Caco-2 (cell line): ENCODE measurements at regions of chr14 and their contacts with region 1.

Region 1: GRCh38 chr14:24160850-24161804 is at the start of gene IRF9:
- DNase-seq: peak; percentile 95 to 96
- H3K4me3 ChIP-seq: peak within 1 kb of the TSS; percentile 29
- H3K4me3 Mint-ChIP-seq: peak within 1 kb of the TSS; percentile 77
- H3K27ac Mint-ChIP-seq: peak within 1 kb of the TSS; percentile 82
- H3K4me1 ChIP-seq: peaks cover 12% of the 10 kb centered on the region
- H3K4me1 Mint-ChIP-seq: peaks cover 6% of the 10 kb centered on the region
- H3K27me3 ChIP-seq: no peaks in the 10 kb centered on the region
- H3K27me3 Mint-ChIP-seq: no peaks in the 10 kb centered on the region
- CTCF ChIP-seq: peak; percentile 88
- total RNA-seq, gene IRF9: 54.1 and 55.4 TPM in 2 replicates

Region 2: DNA sequence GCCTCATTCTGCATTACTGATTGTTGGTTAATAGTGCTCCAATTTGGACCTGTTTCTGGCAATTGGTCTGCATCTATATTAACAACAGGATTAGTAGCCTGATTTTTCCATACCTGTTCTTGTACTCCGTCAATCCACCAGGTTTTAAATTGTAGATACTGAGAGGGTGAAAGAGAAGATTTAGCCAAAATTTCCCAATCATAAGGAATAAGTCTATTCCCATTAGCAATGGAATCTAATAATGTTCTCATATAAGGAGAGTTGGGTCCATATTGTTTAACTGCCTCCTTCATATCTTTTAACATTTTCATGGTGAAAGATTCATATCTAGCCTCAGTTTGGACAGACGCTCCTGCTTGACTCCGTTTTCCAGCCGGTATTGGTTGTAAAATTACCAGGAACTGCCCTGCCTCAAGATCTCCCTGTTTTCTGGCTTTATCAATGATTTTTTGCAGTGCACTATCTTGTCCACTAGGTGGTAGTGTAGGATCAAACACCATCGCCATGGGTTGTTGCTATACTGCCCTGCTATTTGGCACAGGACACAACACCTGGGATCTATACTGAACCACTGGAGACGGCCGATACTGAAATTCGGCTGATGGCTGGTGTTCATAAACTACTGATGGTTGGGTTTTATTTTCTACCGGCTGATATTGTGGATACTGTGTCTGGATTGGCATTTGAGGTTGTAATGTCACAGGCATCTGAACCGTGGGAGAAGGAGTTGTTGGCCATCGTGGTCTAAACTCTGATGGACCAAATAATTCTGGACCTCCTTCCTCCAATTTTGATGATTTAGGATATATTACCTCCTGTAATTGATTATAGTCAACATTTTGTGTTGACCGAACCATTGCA is 147.2 kb before region 1 on chr14:
- CTCF ChIA-PET with region 1: no interaction called
- POLR2A ChIA-PET with region 1: no interaction called
- intact Hi-C with region 1: loop called (anchors 1 kb)
- DNase-seq: peak; percentile 52 to 77
- H3K4me3 ChIP-seq: no peak overlapping the region
- H3K4me3 Mint-ChIP-seq: no peak overlapping the region
- H3K27ac Mint-ChIP-seq: no peak overlapping the region
- H3K4me1 ChIP-seq: no peaks in the 10 kb centered on the region
- H3K4me1 Mint-ChIP-seq: no peaks in the 10 kb centered on the region
- H3K27me3 ChIP-seq: no peaks in the 10 kb centered on the region
- H3K27me3 Mint-ChIP-seq: peaks cover 5% of the 10 kb centered on the region
- CTCF ChIP-seq: peak; percentile 66 to 83

Region 3: DNA sequence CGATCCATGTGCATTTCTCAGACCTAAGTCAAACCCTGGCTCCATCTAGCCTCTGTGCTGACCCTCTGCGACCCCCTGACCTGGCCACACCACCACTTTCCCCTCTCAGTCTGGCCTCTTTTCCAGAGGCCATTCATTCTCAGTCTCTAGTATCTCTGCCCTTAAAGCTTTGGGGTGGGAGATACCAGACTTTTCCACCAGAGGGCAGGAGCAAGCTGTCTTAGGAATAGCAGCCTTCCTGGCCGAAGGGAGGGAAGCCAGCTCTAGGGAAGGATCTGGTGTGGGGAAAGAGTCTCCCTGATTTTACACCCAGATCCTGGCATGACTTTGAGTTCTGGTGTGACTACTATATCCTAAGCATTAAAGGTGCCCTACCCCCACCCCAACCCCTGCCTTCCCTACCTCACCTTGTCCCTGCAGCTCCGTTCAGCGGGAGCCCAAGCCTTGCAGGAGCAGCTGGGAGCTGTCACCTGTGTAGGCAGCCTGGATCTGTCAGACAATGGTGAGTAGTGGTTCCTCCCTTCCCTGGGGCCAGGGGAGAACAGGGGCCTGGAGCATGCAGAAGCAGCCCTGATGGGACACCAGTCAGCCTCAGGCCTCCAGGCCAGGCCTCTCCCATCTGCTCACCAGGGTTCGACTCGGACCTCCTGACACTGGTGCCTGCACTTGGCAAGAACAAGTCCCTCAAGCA is 102.7 kb before region 1 on chr14:
- CTCF ChIA-PET with region 1: interaction called, 10 read pairs
- POLR2A ChIA-PET with region 1: no interaction called
- intact Hi-C with region 1: loop called (anchors 1 kb)
- DNase-seq: peak; percentile 70 to 81
- H3K4me3 ChIP-seq: no peak overlapping the region
- H3K4me3 Mint-ChIP-seq: no peak overlapping the region
- H3K27ac Mint-ChIP-seq: no peak overlapping the region
- H3K4me1 ChIP-seq: no peaks in the 10 kb centered on the region; the same call in 1 of the 2 replicates
- H3K4me1 Mint-ChIP-seq: no peaks in the 10 kb centered on the region
- H3K27me3 ChIP-seq: no peaks in the 10 kb centered on the region
- H3K27me3 Mint-ChIP-seq: peaks cover 3% of the 10 kb centered on the region
- CTCF ChIP-seq: peak; percentile 66 to 85

Region 4: DNA sequence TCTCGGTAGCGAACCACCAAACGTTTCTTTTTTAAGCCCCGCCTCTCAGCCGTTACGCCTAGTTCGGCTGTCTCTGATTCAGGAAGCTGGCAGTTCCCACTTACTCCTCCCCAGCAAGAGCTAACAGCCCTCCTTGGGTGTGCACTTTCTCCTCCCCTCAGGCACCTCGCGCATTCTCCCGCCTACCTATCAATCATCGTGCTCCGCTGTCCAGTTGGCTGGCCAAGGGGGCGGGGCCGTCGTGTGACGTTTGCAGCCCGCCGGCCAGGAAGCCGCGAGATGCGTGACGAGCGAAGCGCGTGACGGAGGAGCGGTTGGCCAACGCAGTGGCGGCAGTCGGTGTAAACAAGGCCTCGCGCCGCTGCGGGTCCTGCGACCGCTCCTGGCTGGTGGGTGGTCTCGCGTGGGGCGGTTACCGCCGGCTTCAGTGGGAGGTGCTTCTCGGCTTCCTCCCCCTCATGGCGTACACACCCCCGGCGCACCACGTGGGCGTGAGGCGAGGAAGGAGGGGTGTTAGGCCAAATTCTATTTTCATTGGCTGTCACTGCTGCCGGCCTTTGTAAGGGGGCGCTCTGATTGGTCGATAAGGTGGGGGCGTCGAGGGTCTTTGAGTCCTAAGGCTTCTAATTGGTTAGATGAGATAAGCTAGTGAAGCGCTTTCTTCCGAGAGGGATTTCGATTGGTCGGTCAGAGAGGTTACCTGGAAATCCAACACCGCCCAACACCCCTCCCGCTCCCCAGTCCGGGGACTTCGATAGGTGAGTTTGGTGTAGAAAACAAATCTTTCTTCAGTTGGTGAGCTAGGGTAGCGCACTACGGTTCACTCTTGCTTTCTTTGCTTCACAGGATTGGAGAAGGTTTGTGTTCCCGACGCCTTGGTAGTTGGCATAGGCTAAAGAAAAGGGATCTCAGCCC is 46.3 kb before region 1 on chr14 and contains the starts of genes DCAF11 and NRL:
- CTCF ChIA-PET with region 1: interaction called, 26 read pairs
- POLR2A ChIA-PET with region 1: interaction called, 16 read pairs
- intact Hi-C with region 1: loop called (anchors 1 kb)
- DNase-seq: peak; percentile 98 to 99
- H3K4me3 ChIP-seq: peak within 1 kb of the TSS; percentile 77
- H3K4me3 Mint-ChIP-seq: peak within 1 kb of the TSS; percentile 100
- H3K27ac Mint-ChIP-seq: peak within 1 kb of the TSS; percentile 98
- H3K4me1 ChIP-seq: no peaks in the 10 kb centered on the region
- H3K4me1 Mint-ChIP-seq: peaks cover 13% of the 10 kb centered on the region
- H3K27me3 ChIP-seq: no peaks in the 10 kb centered on the region
- H3K27me3 Mint-ChIP-seq: no peaks in the 10 kb centered on the region
- CTCF ChIP-seq: no peak
- total RNA-seq, gene DCAF11: 58.1 and 65.9 TPM in 2 replicates
- total RNA-seq, gene NRL: 2.1 and 2.3 TPM in 2 replicates

Region 5: GRCh38 chr14:24141097-24141880 is 19.8 kb before region 1 on chr14 and contains the start of gene EMC9:
- CTCF ChIA-PET with region 1: interaction called, 47 read pairs
- POLR2A ChIA-PET with region 1: interaction called, 15 read pairs
- intact Hi-C with region 1: loop called (anchors 1 kb)
- DNase-seq: peak; percentile 99 to 100
- H3K4me3 ChIP-seq: peak within 1 kb of the TSS; percentile 84
- H3K4me3 Mint-ChIP-seq: peak within 1 kb of the TSS; percentile 99
- H3K27ac Mint-ChIP-seq: peak within 1 kb of the TSS; percentile 88
- H3K4me1 ChIP-seq: no peaks in the 10 kb centered on the region; the same call in 1 of the 2 replicates
- H3K4me1 Mint-ChIP-seq: peaks cover 43% of the 10 kb centered on the region
- H3K27me3 ChIP-seq: no peaks in the 10 kb centered on the region
- H3K27me3 Mint-ChIP-seq: no peaks in the 10 kb centered on the region
- CTCF ChIP-seq: peak; percentile 13 to 50
- total RNA-seq, gene EMC9: 31.1 and 32.4 TPM in 2 replicates

Region 6: GRCh38 chr14:24188251-24189058 is 27.3 kb after region 1 on chr14 and contains the start of gene IPO4:
- CTCF ChIA-PET with region 1: interaction called, 3 read pairs
- POLR2A ChIA-PET with region 1: no interaction called
- intact Hi-C with region 1: loop called (anchors 1 kb)
- DNase-seq: peak; percentile 96 to 98
- H3K4me3 ChIP-seq: peak within 1 kb of the TSS; percentile 63
- H3K4me3 Mint-ChIP-seq: peak within 1 kb of the TSS; percentile 92
- H3K27ac Mint-ChIP-seq: peak within 1 kb of the TSS; percentile 94
- H3K4me1 ChIP-seq: no peaks in the 10 kb centered on the region
- H3K4me1 Mint-ChIP-seq: peaks cover 14% of the 10 kb centered on the region
- H3K27me3 ChIP-seq: no peaks in the 10 kb centered on the region
- H3K27me3 Mint-ChIP-seq: no peaks in the 10 kb centered on the region
- CTCF ChIP-seq: no peak
- total RNA-seq, gene IPO4: 85.4 and 95.8 TPM in 2 replicates

Region 7: DNA sequence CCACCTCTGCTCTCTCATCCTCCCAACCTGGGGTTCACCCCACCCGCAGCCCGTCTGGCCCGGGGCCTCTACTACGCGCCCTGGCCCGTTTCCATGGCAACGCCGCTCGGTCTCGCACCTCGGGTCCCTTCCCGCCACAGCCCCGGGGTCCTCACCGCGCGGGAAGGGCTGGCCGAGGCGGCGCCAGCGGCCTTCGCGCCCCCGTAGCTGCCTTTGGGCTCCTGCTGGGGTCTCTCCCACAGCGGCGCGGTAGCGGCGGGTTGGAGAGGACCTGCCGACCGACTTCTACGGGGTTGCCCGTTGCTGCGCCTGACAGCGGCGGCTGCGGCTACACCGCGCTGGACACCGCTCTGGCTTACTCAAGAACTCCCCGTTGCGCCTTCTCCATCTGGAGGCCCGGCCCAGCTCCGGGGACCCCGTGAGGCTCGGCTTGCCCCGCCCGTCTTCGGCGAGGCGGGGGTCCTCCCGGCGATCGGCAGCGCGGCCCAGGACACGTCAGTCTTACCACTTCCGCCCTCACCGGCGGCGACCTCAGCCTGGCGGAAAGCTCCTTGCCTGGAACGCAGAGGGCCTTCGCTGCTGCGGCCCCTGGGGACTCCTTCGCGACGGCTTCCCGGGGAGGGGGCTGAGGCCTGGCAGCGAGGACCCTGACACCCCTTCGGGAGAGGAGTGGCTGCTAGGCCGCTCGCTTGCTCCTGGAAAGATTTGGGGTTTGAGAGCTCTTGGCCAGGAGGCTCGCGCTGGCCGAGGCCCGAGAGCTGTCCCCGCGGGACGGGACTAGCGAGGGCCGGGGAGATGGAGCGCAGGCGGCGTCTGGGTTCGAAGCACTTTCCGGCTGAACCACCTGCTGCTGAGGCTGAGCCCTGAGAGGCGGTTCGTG is 34.3 kb after region 1 on chr14 and contains the start of gene TM9SF1:
- CTCF ChIA-PET with region 1: interaction called, 7 read pairs
- POLR2A ChIA-PET with region 1: interaction called, 3 read pairs
- intact Hi-C with region 1: loop called (anchors 1 kb)
- DNase-seq: peak; percentile 88 to 90
- H3K4me3 ChIP-seq: peak within 1 kb of the TSS; percentile 95
- H3K4me3 Mint-ChIP-seq: peak within 1 kb of the TSS; percentile 84
- H3K27ac Mint-ChIP-seq: peak within 1 kb of the TSS; percentile 88
- H3K4me1 ChIP-seq: 0 out of 2 replicates have a peak, but pooled peaks cover 9% of the 10 kb centered on the region
- H3K4me1 Mint-ChIP-seq: peaks cover 11% of the 10 kb centered on the region
- H3K27me3 ChIP-seq: no peaks in the 10 kb centered on the region
- H3K27me3 Mint-ChIP-seq: no peaks in the 10 kb centered on the region
- CTCF ChIP-seq: no peak
- total RNA-seq, gene TM9SF1: 41.9 and 47.1 TPM in 2 replicates

Region 8: GRCh38 chr14:24429395-24430142 is 268.4 kb after region 1 on chr14 and contains the starts of genes CBLN3 and KHNYN:
- CTCF ChIA-PET with region 1: no interaction called
- POLR2A ChIA-PET with region 1: no interaction called
- intact Hi-C with region 1: no loop called
- DNase-seq: peak; percentile 87
- H3K4me3 ChIP-seq: peak within 1 kb of the TSS; percentile 63
- H3K4me3 Mint-ChIP-seq: peak within 1 kb of the TSS; percentile 78
- H3K27ac Mint-ChIP-seq: peak within 1 kb of the TSS; percentile 85
- H3K4me1 ChIP-seq: peaks cover 62% of the 10 kb centered on the region
- H3K4me1 Mint-ChIP-seq: peaks cover 39% of the 10 kb centered on the region
- H3K27me3 ChIP-seq: no peaks in the 10 kb centered on the region
- H3K27me3 Mint-ChIP-seq: no peaks in the 10 kb centered on the region
- CTCF ChIP-seq: no peak
- total RNA-seq, gene CBLN3: 1.1 and 1.4 TPM in 2 replicates
- total RNA-seq, gene KHNYN: 50.0 and 50.5 TPM in 2 replicates